SK-N-SH (cell line): ENCODE measurements at regions of chr2 and their contacts with region 1.

Region 1: GRCh38 chr2:237141556-237141955 is 55.9 kb downstream of the COPS8 start:
- DNase-seq: no peak
- H3K4me3 ChIP-seq: no peak overlapping the region
- H3K27ac ChIP-seq: no peak overlapping the region
- H3K4me1 ChIP-seq: no peaks in the 10 kb centered on the region
- H3K27me3 ChIP-seq: no peaks in the 10 kb centered on the region
- CTCF ChIP-seq: no peak
- EP300 ChIP-seq: no peak
- RAD21 ChIP-seq: no peak

Region 2: GRCh38 chr2:237154082-237154638 is 12.6 kb after region 1 on chr2:
- CTCF ChIA-PET with region 1: interaction called, 13 read pairs
- POLR2A ChIA-PET with region 1: no interaction called
- DNase-seq: peak; percentile 70
- H3K4me3 ChIP-seq: no peak overlapping the region
- H3K27ac ChIP-seq: no peak overlapping the region
- H3K4me1 ChIP-seq: peaks cover 19 to 22% of the 10 kb centered on the region in 2 experiments; a peak in 3 of 4 replicates
- H3K27me3 ChIP-seq: no peaks in the 10 kb centered on the region
- CTCF ChIP-seq: peak; percentile 66
- EP300 ChIP-seq: no peak
- RAD21 ChIP-seq: peak; percentile 97